Dorsolateral prefrontal cortex (tissue), 120 donors: ENCODE measurements at regions of chr12 and their contacts with region 1.

Region 1: GRCh38 chr12:88141770-88142609 is at the starts of genes CEP290 and TMTC3:
- DNase-seq: peak; percentile 95 to 100 (median 98)
- H3K4me3 ChIP-seq: peak within 1 kb of the TSS; percentile 72 to 99 (median 90)
- H3K27ac ChIP-seq: peak within 1 kb of the TSS in 58 of 59 donors; percentile 47 to 93 (median 82)
- H3K27me3 ChIP-seq: no peaks in the 10 kb centered on the region
- CTCF ChIP-seq: peak in 41 of 56 donors; percentile 3 to 61 (median 30)
- total RNA-seq, gene CEP290: 23.5 to 46.5 (median 32.0) TPM
- total RNA-seq, gene TMTC3: 17.1 to 33.1 (median 23.9) TPM

Region 2: GRCh38 chr12:88035271-88035906 is 106.6 kb before region 1 on chr12:
- intact Hi-C with region 1: loop called in 1 of 2 experiments (anchors 5 kb)
- DNase-seq: peak; percentile 89 to 97 (median 94)
- H3K4me3 ChIP-seq: peak overlapping the region; percentile 57 to 98 (median 86)
- H3K27ac ChIP-seq: peak overlapping the region in 52 of 59 donors; percentile 24 to 91 (median 70)
- H3K27me3 ChIP-seq: no peaks in the 10 kb centered on the region
- CTCF ChIP-seq: peak in 32 of 56 donors; percentile 4 to 50 (median 26)

Region 3: GRCh38 chr12:88163371-88163770 is 21.4 kb after region 1 on chr12:
- intact Hi-C with region 1: no loop called
- DNase-seq: no peak
- H3K4me3 ChIP-seq: no peak overlapping the region
- H3K27ac ChIP-seq: no peak overlapping the region
- H3K27me3 ChIP-seq: no peaks in the 10 kb centered on the region
- CTCF ChIP-seq: no peak

Region 4: DNA sequence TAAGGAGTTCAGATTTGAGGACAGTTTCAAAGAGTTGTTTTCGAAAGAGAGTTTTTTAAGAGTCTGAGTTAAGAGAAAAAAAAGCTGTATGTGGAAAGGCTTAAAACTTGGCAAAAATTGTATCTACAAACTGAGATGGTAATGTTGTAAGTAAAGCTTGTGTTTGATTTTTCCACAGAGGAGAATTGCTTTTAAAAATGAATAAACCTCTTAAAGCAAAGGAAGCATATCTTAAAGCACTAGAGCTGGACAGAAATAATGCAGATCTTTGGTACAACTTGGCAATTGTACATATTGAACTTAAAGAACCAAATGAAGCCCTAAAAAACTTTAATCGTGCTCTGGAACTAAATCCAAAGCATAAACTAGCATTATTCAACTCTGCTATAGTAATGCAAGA is 50.4 kb after region 1 on chr12:
- intact Hi-C with region 1: no loop called
- DNase-seq: no peak
- H3K4me3 ChIP-seq: no peak overlapping the region
- H3K27ac ChIP-seq: no peak overlapping the region
- H3K27me3 ChIP-seq: no peaks in the 10 kb centered on the region
- CTCF ChIP-seq: no peak

Region 5: DNA sequence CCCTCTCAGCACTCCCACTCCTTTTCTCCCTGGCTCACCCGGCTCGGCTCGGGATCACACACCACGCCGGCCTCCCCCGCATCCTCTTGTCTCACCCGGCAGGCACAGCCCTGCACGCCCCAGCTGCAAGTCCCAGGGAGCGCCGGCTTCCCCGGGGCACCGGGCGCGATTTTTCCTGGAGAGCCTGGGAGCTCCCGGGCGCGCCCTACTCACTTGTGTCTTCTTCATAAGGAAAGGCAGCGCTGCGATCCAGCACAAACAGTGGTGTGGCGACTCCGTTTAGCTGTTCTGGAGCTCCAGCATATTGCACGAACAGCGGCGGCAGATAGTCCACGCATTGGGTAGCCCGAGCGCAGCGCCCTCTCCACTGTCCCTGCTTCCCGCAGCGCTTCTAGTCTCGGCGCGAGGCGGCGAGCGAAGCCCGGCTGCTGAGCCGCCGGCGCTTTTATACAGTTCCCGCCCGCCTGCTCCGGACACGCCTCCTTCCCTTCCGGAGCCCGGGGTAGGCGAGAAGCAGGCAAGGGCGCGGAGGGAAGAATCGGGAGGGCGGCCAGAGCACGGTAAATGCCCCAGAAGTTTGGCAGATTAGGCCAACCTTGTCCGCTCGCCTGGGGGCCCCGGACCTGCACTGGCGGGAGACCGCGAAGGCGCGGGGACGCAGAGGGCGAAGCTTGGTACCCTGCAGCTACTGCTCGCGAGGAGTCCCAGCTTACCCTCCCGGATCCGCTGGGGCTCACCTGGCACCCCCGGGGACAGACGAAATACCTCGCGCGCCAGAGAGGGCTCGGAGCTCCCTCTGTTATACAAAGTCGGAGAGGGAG is 438.3 kb after region 1 on chr12 and contains the start of gene KITLG:
- intact Hi-C with region 1: loop called in 1 of 2 experiments (anchors 5 kb)
- DNase-seq: peak; percentile 7 to 81 (median 61)
- H3K4me3 ChIP-seq: peak within 1 kb of the TSS; percentile 39 to 85 (median 72)
- H3K27ac ChIP-seq: peak within 1 kb of the TSS in 57 of 59 donors; percentile 25 to 91 (median 71)
- H3K27me3 ChIP-seq: no peaks in the 10 kb centered on the region
- CTCF ChIP-seq: peak in 32 of 56 donors; percentile 0 to 45 (median 24)
- total RNA-seq, gene KITLG: 10.4 to 50.7 (median 27.3) TPM